Astrocyte of the cerebellum (primary cell): ENCODE measurements at regions of chr15 and their contacts with region 1.

Region 1: DNA sequence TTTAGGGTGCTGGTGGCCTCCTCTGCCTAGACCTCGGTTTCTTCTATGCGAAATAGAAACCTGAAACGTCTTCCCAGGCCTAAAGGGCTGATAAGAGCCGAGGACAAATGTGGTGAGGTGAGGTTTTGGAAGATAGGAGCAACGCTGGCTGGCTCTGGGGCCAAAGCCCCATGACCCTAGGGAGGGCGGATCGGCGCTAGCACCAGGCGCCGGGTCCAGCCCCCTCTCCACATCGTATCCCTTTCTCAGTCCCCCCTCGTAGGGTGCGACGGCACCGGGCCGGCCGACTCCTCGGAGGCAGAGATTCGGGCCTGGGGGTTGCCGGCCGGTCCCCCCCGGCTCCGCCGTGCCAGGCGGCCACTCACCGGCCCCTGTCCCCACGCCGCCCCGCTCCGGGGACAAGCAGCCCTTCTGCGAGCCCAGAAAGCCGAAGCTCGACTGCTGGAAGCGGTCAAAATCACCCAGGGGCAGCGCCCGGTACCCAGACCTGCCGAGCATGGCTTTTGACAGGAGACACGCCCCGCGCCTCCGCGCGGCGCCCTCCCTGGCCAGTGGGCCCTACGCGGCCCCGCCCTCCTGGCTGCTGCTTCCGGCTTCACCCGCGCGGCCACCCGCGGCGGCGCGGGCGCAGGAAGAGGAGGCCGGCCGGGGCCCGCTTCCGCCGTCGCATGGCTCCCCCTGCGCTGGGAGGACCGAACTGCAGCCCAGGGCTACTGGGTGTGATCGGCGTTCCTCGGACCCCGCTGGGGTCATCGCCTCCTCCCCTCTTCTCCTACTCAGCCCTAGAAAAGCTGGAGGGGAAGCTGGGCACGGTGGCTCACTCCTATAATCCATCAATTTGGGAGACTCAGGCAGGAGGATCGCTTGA is at the start of gene STOML1:
- DNase-seq: peak; percentile 80
- H3K4me3 ChIP-seq: peak within 1 kb of the TSS; percentile 68
- CTCF ChIP-seq: peak; percentile 81

Region 2: GRCh38 chr15:74040109-74040850 is 48.3 kb after region 1 on chr15:
- in situ Hi-C with region 1: loop called (anchors 5 kb)
- DNase-seq: peak; percentile 97
- H3K4me3 ChIP-seq: no peak overlapping the region
- CTCF ChIP-seq: no peak

Region 3: GRCh38 chr15:74322181-74323076 is 330.5 kb after region 1 on chr15:
- in situ Hi-C with region 1: loop called (anchors 25 kb)
- DNase-seq: no peak
- H3K4me3 ChIP-seq: no peak overlapping the region
- CTCF ChIP-seq: peak; percentile 88